ENCODE measurements at regions of chr3 and their contacts with region 1.

Region 1: DNA sequence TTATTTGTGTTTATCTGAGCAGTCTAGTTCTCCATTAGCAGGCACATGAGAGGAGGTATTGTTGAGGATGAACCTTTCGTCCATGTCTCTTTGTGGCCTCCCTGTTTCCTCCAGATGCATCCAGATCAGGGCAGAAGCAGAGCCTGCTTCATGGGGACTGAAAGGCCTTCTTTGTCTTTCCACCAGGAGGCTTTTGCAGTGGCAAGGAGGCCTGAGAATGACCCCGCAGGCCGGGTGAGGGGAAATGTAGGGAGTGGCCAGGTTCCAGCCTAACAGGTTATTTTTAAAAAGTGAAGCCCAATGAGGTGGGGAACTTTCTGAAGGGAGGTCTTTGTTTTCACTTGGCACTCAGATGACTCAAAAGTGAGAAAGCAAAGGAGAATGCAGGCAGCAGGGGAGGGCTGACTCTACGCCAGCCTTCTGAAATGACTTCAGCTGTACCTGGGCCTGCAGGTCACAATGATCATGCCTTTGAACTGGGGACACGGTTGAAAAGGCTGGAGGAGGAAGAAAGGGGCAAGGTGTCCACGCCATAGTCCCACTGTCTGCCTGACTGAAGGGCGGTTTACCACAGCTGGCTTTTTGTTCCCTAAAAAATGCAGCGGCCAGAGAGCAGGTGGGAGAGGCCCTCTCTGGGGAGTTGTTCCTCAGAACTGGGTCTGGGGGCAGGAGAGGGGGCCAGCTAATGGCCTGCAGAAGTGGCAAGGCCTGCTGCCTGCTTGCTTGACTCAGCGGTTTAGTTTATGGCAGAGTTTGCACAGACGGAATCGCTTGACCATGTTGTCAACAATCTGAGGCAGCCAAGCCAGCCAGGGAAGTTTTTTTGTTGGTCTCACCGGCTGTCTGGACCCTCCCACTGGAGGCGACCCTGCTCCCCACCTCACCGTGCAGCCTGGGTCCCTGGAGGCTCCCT is 28.7 kb downstream of the CMTM7 start:
- DNase-seq: peak; percentile 74
- ATAC-seq: peak; percentile 86
- H3K4me3 Mint-ChIP-seq: peak overlapping the region; percentile 23
- H3K27ac Mint-ChIP-seq: peak overlapping the region; percentile 90
- H3K4me1 Mint-ChIP-seq: peaks cover 95% of the 10 kb centered on the region
- H3K27me3 Mint-ChIP-seq: no peaks in the 10 kb centered on the region

Region 2: GRCh38 chr3:32401556-32402081 is 18.8 kb before region 1 on chr3:
- CTCF ChIA-PET with region 1: interaction called, 17 read pairs
- POLR2A ChIA-PET with region 1: no interaction called
- intact Hi-C with region 1: loop called in 1 of 2 experiments (anchors 2 kb)
- DNase-seq: peak; percentile 79
- ATAC-seq: peak; percentile 78
- H3K4me3 Mint-ChIP-seq: peak overlapping the region; percentile 90
- H3K27ac Mint-ChIP-seq: peak overlapping the region; percentile 100
- H3K4me1 Mint-ChIP-seq: peaks cover 71% of the 10 kb centered on the region
- H3K27me3 Mint-ChIP-seq: no peaks in the 10 kb centered on the region